ENCODE measurements at regions of chr5 and their contacts with region 1.

Region 1: DNA sequence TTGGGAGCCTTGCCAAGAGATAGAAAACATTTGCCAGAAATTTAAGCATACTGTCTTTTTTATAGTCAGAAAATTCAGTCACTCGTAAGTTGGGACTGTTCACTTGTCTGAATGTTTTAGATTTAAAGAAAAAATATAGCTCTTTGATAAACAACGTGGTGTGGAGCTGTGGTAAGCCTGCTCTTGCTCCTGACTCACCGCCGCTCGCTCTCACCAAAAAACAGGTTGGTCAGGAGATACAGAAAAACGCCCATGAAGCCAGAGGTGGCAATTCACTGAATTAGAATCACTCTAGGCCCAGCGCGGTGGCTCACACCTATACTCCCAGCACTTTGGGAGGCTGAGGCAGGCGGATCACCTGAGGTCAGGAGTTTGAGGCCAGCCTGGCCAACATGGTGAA is 6.2 kb downstream of the LNPEP start:
- DNase-seq: no peak
- ATAC-seq: no peak
- H3K4me3 Mint-ChIP-seq: no peak overlapping the region
- H3K27ac Mint-ChIP-seq: no peak overlapping the region
- H3K4me1 Mint-ChIP-seq: peaks cover 72% of the 10 kb centered on the region
- H3K27me3 Mint-ChIP-seq: no peaks in the 10 kb centered on the region
- CTCF ChIP-seq: no peak

Region 2: DNA sequence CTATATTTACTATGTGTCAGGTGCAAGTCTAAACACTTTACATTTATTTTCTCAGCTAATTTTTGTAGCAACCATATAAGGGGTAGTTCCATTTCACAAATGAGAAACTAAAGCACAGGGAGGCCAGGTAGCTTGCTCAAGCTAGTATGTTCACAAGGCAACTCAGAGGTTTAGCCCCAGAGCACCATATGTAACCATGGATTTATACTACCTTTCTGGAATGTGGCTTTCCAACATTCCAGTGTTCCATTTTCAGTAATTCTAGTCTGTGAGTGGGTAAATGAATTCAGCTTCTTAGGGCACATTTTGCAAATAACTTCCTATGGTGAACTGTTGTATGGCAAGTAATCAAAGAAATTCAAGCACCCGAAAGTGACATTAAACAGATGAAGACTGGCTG is 304.9 kb before region 1 on chr5:
- CTCF ChIA-PET with region 1: no interaction called
- POLR2A ChIA-PET with region 1: interaction called, 10 read pairs
- intact Hi-C with region 1: no loop called
- DNase-seq: no peak
- ATAC-seq: no peak
- H3K4me3 Mint-ChIP-seq: no peak overlapping the region
- H3K27ac Mint-ChIP-seq: no peak overlapping the region
- H3K4me1 Mint-ChIP-seq: no peaks in the 10 kb centered on the region
- H3K27me3 Mint-ChIP-seq: peaks cover 10% of the 10 kb centered on the region
- CTCF ChIP-seq: no peak